ENCODE measurements at regions of chr4 and their contacts with region 1.

Region 1: DNA sequence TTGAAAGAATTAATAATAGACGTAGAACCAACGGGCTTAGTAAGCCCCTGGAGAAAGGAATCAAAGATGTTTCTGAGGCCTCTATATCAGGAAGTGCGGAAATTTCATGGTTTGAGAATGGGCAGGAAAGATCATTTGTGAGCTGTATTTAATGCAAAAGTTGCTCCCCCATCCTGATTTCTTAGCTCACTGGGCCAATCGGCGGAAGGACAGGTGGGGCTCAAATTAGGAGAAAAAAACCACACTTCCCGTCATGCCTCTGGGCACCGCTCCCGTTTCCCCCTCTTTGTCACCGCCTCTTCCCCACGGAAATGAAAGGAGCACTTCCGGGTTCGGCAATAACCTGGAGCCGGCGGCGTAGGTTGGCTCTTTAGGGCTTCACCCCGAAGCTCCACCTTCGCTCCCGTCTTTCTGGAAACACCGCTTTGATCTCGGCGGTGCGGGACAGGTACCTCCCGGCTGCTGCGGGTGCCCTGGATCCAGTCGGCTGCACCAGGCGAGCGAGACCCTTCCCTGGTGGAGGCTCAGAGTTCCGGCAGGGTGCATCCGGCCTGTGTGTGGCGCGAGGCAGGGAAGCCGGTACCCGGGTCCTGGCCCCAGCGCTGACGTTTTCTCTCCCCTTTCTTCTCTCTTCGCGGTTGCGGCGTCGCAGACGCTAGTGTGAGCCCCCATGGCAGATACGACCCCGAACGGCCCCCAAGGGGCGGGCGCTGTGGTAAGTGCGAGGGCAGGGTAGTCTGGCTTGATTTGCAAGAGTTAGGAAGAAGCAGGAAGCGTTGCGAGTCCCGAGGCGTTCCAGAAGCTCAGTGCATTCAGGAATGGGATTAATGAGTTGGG is at the start of gene TMEM33:
- DNase-seq: peak; percentile 94
- ATAC-seq: peak; percentile 90
- H3K4me3 ChIP-seq: peak within 1 kb of the TSS; percentile 84 to 94 (median 92)
- H3K27ac ChIP-seq: peak within 1 kb of the TSS; percentile 88
- H3K4me1 ChIP-seq: peaks cover 54% of the 10 kb centered on the region
- H3K27me3 ChIP-seq: no peaks in the 10 kb centered on the region; a peak in 1 of 5 replicates
- CTCF ChIP-seq: 0 out of 2 replicates have a peak, but pooled peaks have one; percentile 3
- EP300 ChIP-seq: peak in 1 of 2 experiments; percentile 29; a peak in 2 of 4 replicates
- POLR2A ChIP-seq: peak; percentile 72 to 82
- RAD21 ChIP-seq: no peak
- total RNA-seq, gene TMEM33: 51.6 and 66.6 TPM in 2 replicates

Region 2: DNA sequence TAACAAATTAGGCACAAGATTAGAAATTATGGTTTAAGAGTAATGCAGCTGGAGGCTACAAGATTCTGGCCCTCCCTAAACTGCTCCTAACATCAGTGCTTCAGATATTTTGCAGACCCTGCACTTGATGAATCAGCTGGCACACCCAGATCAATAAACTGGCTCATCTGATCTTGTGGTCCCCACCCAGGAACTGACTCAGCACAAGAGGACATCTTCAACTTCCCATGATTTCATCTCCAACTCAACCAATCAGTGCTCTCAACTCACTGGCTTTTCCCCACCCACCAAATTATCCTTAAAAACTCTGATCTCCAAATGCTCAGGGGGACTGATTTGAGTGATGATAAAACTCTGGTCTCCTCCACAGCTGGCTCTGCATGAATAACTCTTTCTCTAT is 21.5 kb before region 1 on chr4:
- CTCF ChIA-PET with region 1: no interaction called
- POLR2A ChIA-PET with region 1: interaction called, 11 read pairs
- in situ Hi-C with region 1: no loop called
- intact Hi-C with region 1: no loop called
- DNase-seq: no peak
- ATAC-seq: no peak
- H3K4me3 ChIP-seq: no peak overlapping the region
- H3K27ac ChIP-seq: no peak overlapping the region
- H3K4me1 ChIP-seq: peaks cover 13% of the 10 kb centered on the region
- H3K27me3 ChIP-seq: no peaks in the 10 kb centered on the region
- CTCF ChIP-seq: no peak
- EP300 ChIP-seq: no peak
- POLR2A ChIP-seq: no peak
- RAD21 ChIP-seq: no peak

Region 3: GRCh38 chr4:41990365-41991111 is 55.5 kb after region 1 on chr4 and contains the start of gene SLC30A9:
- CTCF ChIA-PET with region 1: no interaction called
- POLR2A ChIA-PET with region 1: interaction called, 7 read pairs
- in situ Hi-C with region 1: no loop called
- intact Hi-C with region 1: loop called (anchors 1 kb)
- DNase-seq: peak; percentile 92
- ATAC-seq: peak; percentile 96
- H3K4me3 ChIP-seq: peak within 1 kb of the TSS; percentile 85 to 89 (median 89)
- H3K27ac ChIP-seq: peak within 1 kb of the TSS; percentile 70
- H3K4me1 ChIP-seq: peaks cover 23% of the 10 kb centered on the region
- H3K27me3 ChIP-seq: no peaks in the 10 kb centered on the region; a peak in 1 of 5 replicates
- CTCF ChIP-seq: peak; percentile 50
- EP300 ChIP-seq: no peak
- POLR2A ChIP-seq: peak; percentile 88 to 94
- RAD21 ChIP-seq: no peak
- total RNA-seq, gene SLC30A9: 72.8 and 104 TPM in 2 replicates

Region 4: GRCh38 chr4:42132099-42132498 is 197.1 kb after region 1 on chr4:
- CTCF ChIA-PET with region 1: no interaction called
- POLR2A ChIA-PET with region 1: no interaction called
- in situ Hi-C with region 1: no loop called
- intact Hi-C with region 1: no loop called
- DNase-seq: no peak
- ATAC-seq: no peak
- H3K4me3 ChIP-seq: no peak overlapping the region
- H3K27ac ChIP-seq: no peak overlapping the region
- H3K4me1 ChIP-seq: no peaks in the 10 kb centered on the region
- H3K27me3 ChIP-seq: peaks cover 0 to 8% of the 10 kb centered on the region in 2 experiments; a peak in 1 of 5 replicates
- CTCF ChIP-seq: no peak
- EP300 ChIP-seq: no peak
- POLR2A ChIP-seq: no peak
- RAD21 ChIP-seq: no peak

Measured in HepG2 (cell line).